CD8-positive, alpha-beta T cell (primary cell): ENCODE measurements at regions of chr2 and their contacts with region 1.

Region 1: GRCh38 chr2:112054847-112055729 is at the start of gene TMEM87B:
- DNase-seq: peak; percentile 93 to 98 (median 97)
- ATAC-seq: peak; percentile 67
- H3K4me3 ChIP-seq: peak within 1 kb of the TSS; percentile 92 to 95
- H3K4me3 Mint-ChIP-seq: peak within 1 kb of the TSS; percentile 96
- H3K27ac ChIP-seq: peak within 1 kb of the TSS; percentile 71 to 93
- H3K27ac Mint-ChIP-seq: peak within 1 kb of the TSS; percentile 97
- H3K4me1 ChIP-seq: peaks cover 19% of the 10 kb centered on the region
- H3K4me1 Mint-ChIP-seq: peaks cover 46% of the 10 kb centered on the region
- H3K27me3 ChIP-seq: no peaks in the 10 kb centered on the region
- H3K27me3 Mint-ChIP-seq: no peaks in the 10 kb centered on the region
- CTCF ChIP-seq: no peak
- total RNA-seq, gene TMEM87B: 5.4 to 7.5 TPM

Region 2: DNA sequence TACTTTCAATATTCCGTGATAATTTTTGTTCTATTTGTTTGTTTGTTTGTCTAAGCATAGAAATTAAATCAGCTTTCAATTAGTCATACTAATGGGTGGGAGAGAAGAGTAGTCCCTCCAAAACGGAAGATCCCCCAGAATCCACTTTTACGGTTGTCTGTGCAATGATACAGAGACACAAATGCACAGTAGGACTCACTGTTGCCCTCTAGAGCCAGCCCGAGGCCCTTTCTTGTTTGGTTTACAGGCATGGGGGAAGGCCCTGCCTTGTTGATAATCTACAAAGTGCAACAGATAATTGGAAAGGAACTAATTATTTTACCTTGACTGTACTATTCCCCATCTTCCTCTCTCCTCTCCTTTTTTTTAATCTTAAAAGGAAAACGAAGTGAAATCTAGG is 1201.6 kb before region 1 on chr2:
- CTCF ChIA-PET with region 1: no interaction called
- POLR2A ChIA-PET with region 1: no interaction called
- intact Hi-C with region 1: loop called in 1 of 2 experiments (anchors 10 kb)
- DNase-seq: peak in 7 of 9 experiments; percentile 37 to 84 (median 67)
- ATAC-seq: no peak
- H3K4me3 ChIP-seq: no peak overlapping the region
- H3K4me3 Mint-ChIP-seq: peak overlapping the region; percentile 12
- H3K27ac ChIP-seq: no peak overlapping the region
- H3K27ac Mint-ChIP-seq: peak overlapping the region; percentile 87
- H3K4me1 ChIP-seq: peaks cover 44% of the 10 kb centered on the region
- H3K4me1 Mint-ChIP-seq: peaks cover 64% of the 10 kb centered on the region
- H3K27me3 ChIP-seq: no peaks in the 10 kb centered on the region
- H3K27me3 Mint-ChIP-seq: no peaks in the 10 kb centered on the region
- CTCF ChIP-seq: peak; percentile 67

Region 3: DNA sequence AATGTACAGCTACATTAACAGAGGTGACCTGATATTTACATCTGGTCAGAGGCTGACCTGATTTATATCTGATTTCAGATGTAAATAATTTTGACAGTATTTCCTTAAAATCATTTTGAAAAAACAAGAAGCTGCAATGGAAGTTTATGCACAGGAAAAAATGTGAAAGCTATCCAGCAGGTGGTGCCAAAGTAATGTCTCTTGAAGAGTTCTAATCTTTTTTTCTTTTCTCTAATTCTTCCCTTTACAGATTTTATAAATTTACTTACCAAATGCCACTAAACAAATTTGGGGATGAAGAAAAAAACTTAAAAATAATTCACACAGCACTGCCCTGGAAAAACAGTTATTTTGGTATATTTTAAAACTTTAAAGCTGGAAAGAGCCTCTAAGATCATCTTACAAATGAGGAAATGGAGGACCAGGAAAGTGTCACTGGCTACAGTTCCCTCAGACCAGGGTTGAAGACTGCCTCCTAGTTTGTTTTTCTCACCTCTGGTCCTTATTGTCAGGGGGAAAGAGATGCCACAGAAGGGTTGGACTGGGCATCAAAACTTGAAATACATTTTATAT is 66.7 kb after region 1 on chr2:
- CTCF ChIA-PET with region 1: no interaction called
- POLR2A ChIA-PET with region 1: no interaction called
- intact Hi-C with region 1: loop called in 1 of 2 experiments (anchors 1 kb)
- DNase-seq: peak in 7 of 9 experiments; percentile 21 to 70 (median 53)
- ATAC-seq: peak; percentile 42
- H3K4me3 ChIP-seq: no peak overlapping the region
- H3K4me3 Mint-ChIP-seq: no peak overlapping the region
- H3K27ac ChIP-seq: no peak overlapping the region
- H3K27ac Mint-ChIP-seq: no peak overlapping the region
- H3K4me1 ChIP-seq: no peaks in the 10 kb centered on the region
- H3K4me1 Mint-ChIP-seq: no peaks in the 10 kb centered on the region
- H3K27me3 ChIP-seq: no peaks in the 10 kb centered on the region
- H3K27me3 Mint-ChIP-seq: no peaks in the 10 kb centered on the region
- CTCF ChIP-seq: peak; percentile 85

Region 4: DNA sequence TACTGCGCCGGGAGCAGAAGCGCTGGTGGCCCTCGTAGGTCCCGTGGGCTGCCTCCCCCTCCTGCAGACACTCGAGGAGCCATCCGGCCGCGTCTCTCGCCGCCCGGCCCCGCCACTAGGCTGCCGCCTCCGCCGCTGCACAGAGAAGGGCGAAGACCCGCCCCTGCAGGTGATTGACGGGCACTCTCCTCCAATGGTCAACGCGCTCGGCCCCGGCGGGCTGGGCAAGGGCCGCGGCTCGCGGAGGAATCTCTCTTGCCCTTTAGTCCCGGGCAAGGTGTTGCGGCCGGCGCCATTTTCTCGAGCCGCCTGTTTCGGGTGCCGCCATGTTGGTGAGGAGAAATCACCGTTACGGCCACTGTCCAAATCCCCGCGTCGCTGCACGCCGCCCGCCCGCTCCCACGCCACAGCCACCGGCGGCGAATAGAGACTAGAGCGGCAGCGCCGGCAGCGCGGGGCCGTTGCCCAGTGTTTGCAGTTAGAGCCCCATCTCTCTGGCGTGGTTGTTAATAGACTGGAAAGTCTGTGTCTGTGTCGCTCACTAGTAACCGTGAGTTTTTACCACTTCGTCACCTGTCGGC is 220.3 kb after region 1 on chr2 and contains the start of gene ZC3H6:
- CTCF ChIA-PET with region 1: no interaction called
- POLR2A ChIA-PET with region 1: interaction called, 4 read pairs
- intact Hi-C with region 1: loop called (anchors 1 kb)
- DNase-seq: peak; percentile 98 to 100 (median 100)
- ATAC-seq: peak; percentile 90
- H3K4me3 ChIP-seq: peak within 1 kb of the TSS; percentile 74 to 100
- H3K4me3 Mint-ChIP-seq: peak within 1 kb of the TSS; percentile 95
- H3K27ac ChIP-seq: peak within 1 kb of the TSS; percentile 96 to 100
- H3K27ac Mint-ChIP-seq: peak within 1 kb of the TSS; percentile 100
- H3K4me1 ChIP-seq: peaks cover 19% of the 10 kb centered on the region
- H3K4me1 Mint-ChIP-seq: peaks cover 26% of the 10 kb centered on the region
- H3K27me3 ChIP-seq: no peaks in the 10 kb centered on the region
- H3K27me3 Mint-ChIP-seq: no peaks in the 10 kb centered on the region
- CTCF ChIP-seq: peak; percentile 16
- total RNA-seq, gene ZC3H6: 13.7 to 15.1 TPM

Region 5: DNA sequence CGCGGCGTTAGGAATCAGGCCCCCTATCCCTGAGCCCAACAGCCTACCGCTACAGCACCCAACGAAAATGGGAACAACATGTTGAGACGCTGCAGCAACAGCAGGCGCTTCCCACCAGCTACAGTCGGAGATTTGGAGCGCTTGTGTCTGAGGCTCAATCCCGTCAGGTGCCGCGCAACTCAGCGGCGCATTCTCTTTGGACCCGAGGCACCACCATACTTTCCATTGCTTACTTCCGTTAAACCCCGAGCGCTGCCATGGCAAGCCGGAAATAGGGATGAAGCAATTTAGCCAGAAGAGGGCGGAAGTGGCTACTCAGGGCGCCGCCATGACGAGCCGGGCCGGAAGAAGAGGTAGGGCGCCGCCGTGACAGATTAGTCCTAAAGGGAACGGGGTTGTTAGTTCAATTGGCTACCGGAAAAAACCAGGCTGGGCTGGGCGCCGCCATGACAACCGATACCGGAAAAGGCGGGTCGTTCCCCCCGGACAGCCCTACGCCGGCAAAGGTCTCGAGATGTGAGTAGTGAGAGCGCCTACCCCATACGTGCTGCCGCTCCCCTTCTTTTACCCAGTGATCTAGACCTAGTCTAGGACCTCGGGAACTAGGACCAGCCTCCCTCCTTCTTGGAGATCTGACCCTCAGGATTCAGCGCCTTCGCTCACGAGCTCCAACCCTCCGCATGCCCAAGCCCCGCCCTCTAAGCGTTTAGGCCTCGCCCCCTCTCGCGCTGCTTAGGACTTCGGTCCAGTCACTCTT is 529.2 kb after region 1 on chr2 and contains the start of gene CHCHD5:
- CTCF ChIA-PET with region 1: no interaction called
- POLR2A ChIA-PET with region 1: no interaction called
- intact Hi-C with region 1: loop called (anchors 1 to 5 kb)
- DNase-seq: peak; percentile 85 to 97 (median 92)
- ATAC-seq: peak; percentile 84
- H3K4me3 ChIP-seq: peak within 1 kb of the TSS; percentile 79 to 96
- H3K4me3 Mint-ChIP-seq: peak within 1 kb of the TSS; percentile 95
- H3K27ac ChIP-seq: peak within 1 kb of the TSS; percentile 75 to 95
- H3K27ac Mint-ChIP-seq: peak within 1 kb of the TSS; percentile 94
- H3K4me1 ChIP-seq: peaks cover 24% of the 10 kb centered on the region
- H3K4me1 Mint-ChIP-seq: peaks cover 35% of the 10 kb centered on the region
- H3K27me3 ChIP-seq: no peaks in the 10 kb centered on the region
- H3K27me3 Mint-ChIP-seq: no peaks in the 10 kb centered on the region
- CTCF ChIP-seq: no peak
- total RNA-seq, gene CHCHD5: 12.0 to 15.5 TPM

Region 6: DNA sequence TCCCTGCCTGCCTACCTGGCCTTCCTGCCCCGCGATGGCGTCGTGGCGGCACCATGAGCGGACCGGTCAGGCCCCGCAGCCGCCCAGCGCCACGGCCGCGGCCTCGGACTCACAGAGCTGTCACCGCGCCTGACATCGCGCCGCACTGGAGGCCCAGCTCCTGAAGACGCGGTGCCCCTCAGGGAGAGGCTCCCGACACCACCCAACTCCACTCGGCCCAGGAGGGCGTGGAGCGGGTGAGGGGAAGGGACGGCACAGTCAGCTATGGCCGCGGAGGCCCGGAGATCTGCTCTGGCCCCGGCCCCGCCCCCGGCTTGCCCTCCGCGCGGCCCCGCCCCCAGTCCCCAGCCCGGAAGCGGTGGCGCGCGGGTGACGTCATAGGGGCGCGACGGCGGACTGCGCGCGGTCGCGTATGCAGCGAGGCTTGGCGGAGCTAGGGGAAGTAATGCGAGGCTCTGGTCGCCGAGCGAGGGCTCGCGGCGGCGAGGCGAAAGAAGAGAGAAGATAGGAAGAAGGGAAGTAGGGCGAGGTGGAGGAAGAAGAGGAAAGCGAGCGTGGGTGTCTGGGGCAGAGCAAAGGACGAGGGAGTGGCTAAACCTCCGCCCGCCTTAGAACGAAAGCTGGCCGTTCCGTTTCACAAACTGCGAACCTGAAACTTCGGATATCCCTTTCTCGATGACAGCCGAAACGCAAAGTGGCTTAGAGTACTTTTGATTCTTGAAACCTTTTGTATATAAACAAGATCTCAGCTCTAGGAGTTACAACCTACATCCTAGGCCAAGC is 1701.5 kb after region 1 on chr2 and contains the start of gene SLC35F5:
- CTCF ChIA-PET with region 1: no interaction called
- POLR2A ChIA-PET with region 1: no interaction called
- intact Hi-C with region 1: loop called in 1 of 2 experiments (anchors 10 kb)
- DNase-seq: peak; percentile 86 to 98 (median 94)
- ATAC-seq: peak; percentile 90
- H3K4me3 ChIP-seq: peak within 1 kb of the TSS; percentile 82 to 88
- H3K4me3 Mint-ChIP-seq: peak within 1 kb of the TSS; percentile 98
- H3K27ac ChIP-seq: peak within 1 kb of the TSS; percentile 97 to 99
- H3K27ac Mint-ChIP-seq: peak within 1 kb of the TSS; percentile 100
- H3K4me1 ChIP-seq: peaks cover 12% of the 10 kb centered on the region
- H3K4me1 Mint-ChIP-seq: peaks cover 30% of the 10 kb centered on the region
- H3K27me3 ChIP-seq: no peaks in the 10 kb centered on the region
- H3K27me3 Mint-ChIP-seq: no peaks in the 10 kb centered on the region
- CTCF ChIP-seq: no peak
- total RNA-seq, gene SLC35F5: 19.3 to 20.7 TPM